Activated T-helper 2 cell treated with anti-CD3 and anti-CD28 coated beads, Interferon-gamma antibody, Interleukin-2, Interleukin-4, amounts not matched to agents 10 μg/mL and 5 μg/mL and 100 μg/mL, durations not matched to agents 14 hours and 24 hours and 36 hours (primary cell): ENCODE measurements at regions of chr19 and their contacts with region 1.

Region 1: GRCh38 chr19:48899781-48900476 is at the start of gene NUCB1:
- DNase-seq: peak; percentile 99
- H3K4me3 Mint-ChIP-seq: peak within 1 kb of the TSS; percentile 97
- H3K27ac Mint-ChIP-seq: peak within 1 kb of the TSS; percentile 97
- H3K4me1 Mint-ChIP-seq: peaks cover 18% of the 10 kb centered on the region
- H3K27me3 Mint-ChIP-seq: peaks cover 2% of the 10 kb centered on the region
- total RNA-seq, gene NUCB1: 142 and 147 TPM in 2 replicates

Region 2: GRCh38 chr19:48720613-48721296 is 179.2 kb before region 1 on chr19:
- intact Hi-C with region 1: no loop called
- DNase-seq: peak; percentile 90
- H3K4me3 Mint-ChIP-seq: peak overlapping the region; percentile 91
- H3K27ac Mint-ChIP-seq: peak overlapping the region; percentile 98
- H3K4me1 Mint-ChIP-seq: peaks cover 14% of the 10 kb centered on the region
- H3K27me3 Mint-ChIP-seq: no peaks in the 10 kb centered on the region

Region 3: DNA sequence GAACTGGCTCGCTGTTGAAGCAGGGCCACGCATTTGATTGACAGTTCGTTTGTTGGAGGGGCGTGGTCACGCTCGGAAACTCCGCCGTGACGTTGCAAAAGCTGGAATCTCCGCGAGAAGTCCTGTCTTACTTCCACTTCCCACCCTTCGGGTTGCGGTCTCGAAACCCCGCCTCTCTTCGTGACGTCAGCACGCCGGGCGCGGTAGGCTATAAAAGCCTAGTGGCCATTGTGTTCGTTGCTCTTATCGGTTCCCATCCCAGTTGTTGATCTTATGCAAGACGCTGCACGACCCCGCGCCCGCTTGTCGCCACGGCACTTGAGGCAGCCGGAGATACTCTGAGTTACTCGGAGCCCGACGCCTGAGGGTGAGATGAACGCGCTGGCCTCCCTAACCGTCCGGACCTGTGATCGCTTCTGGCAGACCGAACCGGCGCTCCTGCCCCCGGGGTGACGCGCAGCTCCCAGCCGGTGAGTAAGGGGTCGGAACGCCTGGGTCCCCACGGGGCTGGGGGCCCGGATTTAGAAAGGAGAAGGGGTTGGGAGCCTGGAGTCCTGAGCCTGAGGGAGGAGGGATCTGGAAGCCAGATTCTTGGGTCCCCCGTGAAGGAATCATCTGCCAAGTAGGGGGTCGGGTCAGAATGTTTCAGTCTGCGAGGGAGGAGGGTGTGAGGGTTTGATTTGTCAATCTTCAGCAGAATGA is 27.6 kb before region 1 on chr19 and contains the start of gene PPP1R15A:
- intact Hi-C with region 1: loop called (anchors 1 kb)
- DNase-seq: peak; percentile 98
- H3K4me3 Mint-ChIP-seq: peak within 1 kb of the TSS; percentile 94
- H3K27ac Mint-ChIP-seq: peak within 1 kb of the TSS; percentile 99
- H3K4me1 Mint-ChIP-seq: peaks cover 40% of the 10 kb centered on the region
- H3K27me3 Mint-ChIP-seq: peaks cover 4% of the 10 kb centered on the region
- total RNA-seq, gene PPP1R15A: 30.8 and 31.8 TPM in 2 replicates